Psoas muscle (tissue), 8 donors: ENCODE measurements at regions of chr13 and their contacts with region 1.

Region 1: DNA sequence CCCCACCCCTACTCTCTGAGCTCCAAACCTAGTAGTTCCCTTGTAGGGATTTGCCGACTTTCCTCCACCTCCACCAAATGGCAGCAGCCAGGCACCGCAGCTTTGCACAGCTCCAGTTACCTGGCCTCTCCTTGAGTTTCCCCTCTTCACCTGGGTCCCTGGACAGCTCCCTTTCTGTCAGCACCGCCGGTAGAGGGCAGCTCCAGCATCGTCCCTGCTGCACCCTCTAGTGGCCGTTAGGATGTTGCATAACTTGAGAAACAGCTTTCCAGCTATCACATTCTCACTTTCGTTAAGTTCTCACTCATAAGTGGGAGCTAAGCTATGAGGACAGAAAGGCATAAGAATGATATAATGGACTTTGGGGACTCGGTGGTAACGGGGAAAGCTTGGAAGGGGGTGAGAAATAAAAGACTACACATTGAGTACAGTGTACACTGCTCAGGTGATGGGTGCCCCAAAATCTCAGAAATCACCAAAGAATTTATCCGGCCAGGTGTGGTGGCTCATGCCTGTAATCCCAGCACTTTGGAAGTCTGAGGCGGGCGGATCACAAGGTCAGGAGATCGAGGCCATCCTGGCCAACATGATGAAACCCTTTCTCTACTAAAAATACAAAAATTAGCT is 60.4 kb upstream of the OLFM4 start:
- DNase-seq: peak; percentile 49 to 74
- ATAC-seq: peak; percentile 64 to 83 (median 76)
- H3K4me3 ChIP-seq: no peak overlapping the region
- H3K27ac ChIP-seq: no peak overlapping the region
- H3K4me1 ChIP-seq: no peaks in the 10 kb centered on the region
- H3K27me3 ChIP-seq: no peaks in the 10 kb centered on the region
- CTCF ChIP-seq: peak; percentile 77

Region 2: GRCh38 chr13:52405767-52406494 is 562.3 kb before region 1 on chr13 and contains the start of gene THSD1:
- intact Hi-C with region 1: no loop called
- DNase-seq: peak; percentile 75 to 89
- ATAC-seq: peak; percentile 65 to 89 (median 83)
- H3K4me3 ChIP-seq: peak within 1 kb of the TSS; percentile 68
- H3K27ac ChIP-seq: peak within 1 kb of the TSS; percentile 48
- H3K4me1 ChIP-seq: no peaks in the 10 kb centered on the region
- H3K27me3 ChIP-seq: peaks cover 0 to 12% (median 0%) of the 10 kb centered on the region in 3 donors
- CTCF ChIP-seq: no peak
- total RNA-seq, gene THSD1: 2.5 to 5.6 (median 4.5) TPM

Region 3: DNA sequence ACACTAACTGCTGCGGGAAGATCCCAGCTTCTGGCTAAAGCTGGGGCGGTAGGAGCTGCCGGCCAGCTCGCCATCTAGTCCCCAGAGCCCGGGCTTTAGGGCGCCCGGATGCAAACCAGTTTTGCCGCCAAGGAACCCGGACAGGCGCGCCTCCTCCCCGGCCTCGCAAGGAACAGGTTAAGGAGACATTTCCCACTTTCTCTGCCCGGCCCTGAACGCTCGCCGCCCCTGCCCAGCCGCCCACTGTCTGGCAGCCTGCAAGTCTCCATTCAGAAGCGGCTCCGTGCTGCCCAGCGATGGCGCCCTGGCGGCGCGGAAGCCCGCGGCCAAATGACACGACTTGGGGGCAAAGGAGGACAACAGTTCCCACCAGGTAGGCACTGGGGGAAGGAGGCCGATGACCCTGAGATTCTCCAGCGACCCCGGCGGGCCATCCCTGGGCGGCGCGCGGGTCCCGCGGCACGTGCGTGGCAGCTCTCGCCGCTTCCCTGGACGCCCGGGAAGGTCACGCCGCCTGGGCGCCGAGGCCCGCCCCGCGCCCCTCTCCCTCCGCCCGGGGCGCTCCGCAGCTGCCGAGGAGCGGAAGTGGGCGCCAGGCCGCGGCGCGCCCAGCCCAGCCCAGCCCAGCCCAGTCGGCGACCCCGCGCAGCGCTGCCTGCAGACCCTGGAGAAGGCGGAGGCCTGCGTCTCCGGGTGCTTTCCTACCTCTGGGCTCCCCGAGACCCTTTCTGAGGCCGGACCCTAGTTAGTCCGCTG is 368.2 kb before region 1 on chr13:
- intact Hi-C with region 1: loop called in 1 of 2 experiments (anchors 5 kb)
- DNase-seq: peak; percentile 30 to 64
- ATAC-seq: peak; percentile 67 to 82 (median 74)
- H3K4me3 ChIP-seq: peak overlapping the region; percentile 75
- H3K27ac ChIP-seq: peak overlapping the region; percentile 56
- H3K4me1 ChIP-seq: no peaks in the 10 kb centered on the region
- H3K27me3 ChIP-seq: peaks cover 0 to 11% (median 7%) of the 10 kb centered on the region in 3 donors
- CTCF ChIP-seq: no peak